ENCODE measurements at regions of chr14 and their contacts with region 1.

Region 1: DNA sequence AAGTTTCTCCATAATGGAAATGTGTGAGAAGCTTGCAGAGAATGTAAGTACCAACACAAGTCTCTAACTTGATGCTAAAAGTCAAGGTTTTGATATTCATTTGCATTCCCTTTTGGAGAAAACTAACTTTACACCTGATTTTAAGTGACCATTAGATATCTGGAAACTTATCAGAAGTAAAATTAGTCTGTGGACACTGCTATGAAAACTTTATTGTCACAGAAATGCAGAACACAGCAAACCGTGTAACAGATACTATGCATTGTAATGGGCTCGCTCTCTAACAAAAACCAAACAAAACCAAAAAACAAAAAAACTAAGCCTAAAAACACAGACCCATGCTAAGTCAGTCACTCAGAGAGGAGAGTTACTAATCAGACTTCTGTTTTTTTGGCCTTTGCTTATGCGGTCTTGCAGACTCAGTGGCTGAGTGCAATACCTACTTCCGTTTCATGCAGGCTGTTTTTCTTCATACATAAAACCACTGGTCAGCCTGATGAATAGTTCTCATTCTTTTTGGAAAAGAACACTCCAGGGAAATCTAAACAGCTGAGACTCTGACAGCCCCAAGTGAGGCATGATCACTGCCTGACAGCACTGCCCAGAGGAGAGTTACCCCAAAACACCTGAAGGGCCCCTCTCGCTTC is 35.7 kb downstream of the NRDE2 start:
- H3K4me3 Mint-ChIP-seq: peak overlapping the region; percentile 39
- H3K27ac Mint-ChIP-seq: peak overlapping the region; percentile 87
- H3K4me1 Mint-ChIP-seq: peaks cover 63% of the 10 kb centered on the region
- H3K27me3 Mint-ChIP-seq: no peaks in the 10 kb centered on the region

Region 2: DNA sequence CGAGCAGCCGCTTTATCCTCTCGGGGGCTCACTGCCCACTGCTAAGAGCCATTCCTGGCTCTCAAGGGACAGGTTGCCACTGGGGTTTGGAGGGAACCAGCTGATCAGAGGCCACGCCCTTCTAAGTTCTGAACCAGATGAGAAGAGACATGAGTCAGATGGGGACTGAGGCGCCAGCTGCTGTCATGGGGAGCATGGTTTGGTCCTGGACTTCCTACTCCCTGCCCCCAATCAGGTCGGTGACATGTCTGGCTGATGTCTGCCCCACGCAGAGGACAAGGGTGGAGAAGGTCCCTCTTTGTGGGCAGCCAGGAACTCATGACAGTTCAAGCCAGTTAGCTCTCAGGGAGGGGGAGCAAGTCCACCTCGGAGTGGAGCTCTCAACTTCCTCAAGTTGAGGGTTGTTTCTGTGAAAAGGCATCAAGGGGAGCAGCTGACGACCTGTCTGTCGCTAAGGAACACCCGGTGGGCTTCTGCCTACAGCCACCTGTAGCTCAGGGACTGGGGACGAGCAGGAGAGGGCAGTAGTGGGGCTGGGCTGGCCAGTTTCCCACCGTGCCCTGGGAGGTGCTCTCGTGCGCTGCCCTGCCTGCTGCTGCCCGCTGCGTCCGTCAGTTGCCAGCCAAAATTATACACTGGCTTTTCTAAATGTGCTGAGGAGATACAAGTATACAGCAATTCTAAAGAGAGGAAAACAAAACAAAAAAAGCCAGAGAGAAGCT is 19.2 kb before region 1 on chr14:
- intact Hi-C with region 1: loop called (anchors 1 kb)
- H3K4me3 Mint-ChIP-seq: no peak overlapping the region
- H3K27ac Mint-ChIP-seq: peak overlapping the region; percentile 84
- H3K4me1 Mint-ChIP-seq: peaks cover 52% of the 10 kb centered on the region
- H3K27me3 Mint-ChIP-seq: no peaks in the 10 kb centered on the region

Region 3: GRCh38 chr14:90383075-90383730 is 87.2 kb after region 1 on chr14:
- intact Hi-C with region 1: loop called (anchors 5 kb)
- H3K4me3 Mint-ChIP-seq: no peak overlapping the region
- H3K27ac Mint-ChIP-seq: no peak overlapping the region
- H3K4me1 Mint-ChIP-seq: peaks cover 9% of the 10 kb centered on the region
- H3K27me3 Mint-ChIP-seq: no peaks in the 10 kb centered on the region